ENCODE measurements at regions of chr7 and their contacts with region 1.

Region 1: DNA sequence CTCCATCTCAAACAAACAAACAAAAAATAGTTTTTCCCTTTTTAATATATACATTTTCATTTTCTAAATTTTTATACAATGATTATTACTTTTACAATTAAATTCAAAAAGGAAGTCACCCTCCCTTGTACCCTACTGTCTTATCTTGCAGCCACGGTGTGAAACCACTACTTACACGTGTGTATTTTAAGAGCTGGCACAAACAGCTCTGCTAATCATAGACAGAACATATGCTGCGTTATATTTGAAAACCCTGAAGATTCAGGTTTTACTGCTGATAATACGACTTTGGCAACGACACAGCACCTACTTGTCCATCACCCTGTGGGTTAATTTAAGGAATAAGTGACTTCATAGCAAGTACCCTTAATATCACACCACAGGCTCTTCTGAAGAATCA is 991 bp downstream of the ANKRD61 start:
- DNase-seq: peak in 2 of 9 experiments; percentile 33 to 50
- ATAC-seq: no peak
- H3K4me3 ChIP-seq: no peak overlapping the region
- H3K4me3 Mint-ChIP-seq: no peak overlapping the region
- H3K27ac ChIP-seq: peak overlapping the region in 1 of 2 experiments; percentile 41
- H3K27ac Mint-ChIP-seq: no peak overlapping the region
- H3K4me1 ChIP-seq: peaks cover 4% of the 10 kb centered on the region
- H3K4me1 Mint-ChIP-seq: peaks cover 19% of the 10 kb centered on the region
- H3K27me3 ChIP-seq: no peaks in the 10 kb centered on the region
- H3K27me3 Mint-ChIP-seq: no peaks in the 10 kb centered on the region
- CTCF ChIP-seq: no peak

Region 2: GRCh38 chr7:4067874-4068273 is 1964.3 kb before region 1 on chr7:
- CTCF ChIA-PET with region 1: no interaction called
- POLR2A ChIA-PET with region 1: no interaction called
- intact Hi-C with region 1: no loop called
- DNase-seq: peak in 1 of 9 experiments; percentile 31
- ATAC-seq: no peak
- H3K4me3 ChIP-seq: no peak overlapping the region
- H3K4me3 Mint-ChIP-seq: no peak overlapping the region
- H3K27ac ChIP-seq: no peak overlapping the region
- H3K27ac Mint-ChIP-seq: no peak overlapping the region
- H3K4me1 ChIP-seq: no peaks in the 10 kb centered on the region
- H3K4me1 Mint-ChIP-seq: peaks cover 11% of the 10 kb centered on the region
- H3K27me3 ChIP-seq: no peaks in the 10 kb centered on the region
- H3K27me3 Mint-ChIP-seq: no peaks in the 10 kb centered on the region
- CTCF ChIP-seq: no peak

Region 3: DNA sequence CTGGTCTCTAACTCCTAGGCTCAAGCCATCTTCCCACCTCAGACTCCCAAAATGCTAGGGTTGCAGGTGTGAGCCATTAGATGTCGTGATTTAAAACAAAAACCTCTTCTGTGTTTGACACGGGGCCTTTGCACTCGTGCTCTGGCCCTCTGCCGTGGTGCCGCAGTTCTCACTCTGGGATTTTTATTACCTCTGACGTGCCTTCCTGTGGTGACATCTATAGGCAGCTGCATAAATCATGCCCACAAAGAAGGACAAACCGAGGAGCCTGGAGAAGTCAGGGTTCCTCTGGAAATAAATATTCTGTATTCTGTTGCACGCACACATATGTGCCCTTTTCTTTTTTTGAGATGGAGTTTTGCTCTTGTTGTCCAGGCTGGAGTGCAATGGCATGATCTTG is 177.4 kb before region 1 on chr7:
- CTCF ChIA-PET with region 1: no interaction called
- POLR2A ChIA-PET with region 1: no interaction called
- intact Hi-C with region 1: no loop called
- DNase-seq: no peak
- ATAC-seq: no peak
- H3K4me3 ChIP-seq: no peak overlapping the region
- H3K4me3 Mint-ChIP-seq: no peak overlapping the region
- H3K27ac ChIP-seq: no peak overlapping the region
- H3K27ac Mint-ChIP-seq: no peak overlapping the region
- H3K4me1 ChIP-seq: peaks cover 16% of the 10 kb centered on the region
- H3K4me1 Mint-ChIP-seq: peaks cover 18% of the 10 kb centered on the region
- H3K27me3 ChIP-seq: no peaks in the 10 kb centered on the region
- H3K27me3 Mint-ChIP-seq: no peaks in the 10 kb centered on the region
- CTCF ChIP-seq: no peak

Region 4: DNA sequence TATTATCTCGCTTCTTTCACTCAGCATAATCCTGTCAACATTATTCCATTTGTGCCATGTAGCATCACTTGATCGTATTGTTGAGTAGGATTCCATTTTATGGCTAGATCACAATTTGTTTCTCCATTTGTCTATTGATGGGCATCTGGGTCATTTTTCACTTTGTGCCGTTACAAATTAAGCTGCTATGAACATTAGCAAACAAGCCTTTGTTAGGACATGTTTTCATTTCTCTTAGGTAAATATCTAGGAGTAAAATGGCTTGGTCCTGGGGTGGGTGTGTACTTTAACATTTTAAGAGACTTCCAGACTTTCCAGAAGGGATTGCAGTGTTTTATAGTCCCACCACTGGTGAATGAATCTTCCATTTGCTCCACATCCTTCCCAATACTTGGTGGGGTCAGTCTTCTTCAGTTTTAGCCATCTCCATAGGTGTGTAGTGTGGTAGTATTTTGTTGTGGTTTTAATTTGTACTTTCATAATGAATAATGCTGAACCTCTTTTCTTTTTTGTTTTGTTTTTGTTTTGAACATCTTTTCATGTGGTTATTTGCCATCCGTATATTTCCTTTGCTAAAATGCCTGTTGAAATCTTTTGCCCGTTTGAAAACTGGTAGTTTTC is 85.3 kb after region 1 on chr7:
- CTCF ChIA-PET with region 1: no interaction called
- POLR2A ChIA-PET with region 1: interaction called, 3 read pairs
- intact Hi-C with region 1: loop called in 1 of 2 experiments (anchors 5 kb)
- DNase-seq: no peak
- ATAC-seq: no peak
- H3K4me3 ChIP-seq: no peak overlapping the region
- H3K4me3 Mint-ChIP-seq: no peak overlapping the region
- H3K27ac ChIP-seq: no peak overlapping the region
- H3K27ac Mint-ChIP-seq: peak overlapping the region; percentile 50
- H3K4me1 ChIP-seq: no peaks in the 10 kb centered on the region
- H3K4me1 Mint-ChIP-seq: peaks cover 16% of the 10 kb centered on the region
- H3K27me3 ChIP-seq: no peaks in the 10 kb centered on the region
- H3K27me3 Mint-ChIP-seq: no peaks in the 10 kb centered on the region
- CTCF ChIP-seq: no peak

Measured in CD8-positive, alpha-beta T cell (primary cell).